CD4-positive, alpha-beta memory T cell (primary cell): ENCODE measurements at regions of chr1 and their contacts with region 1.

Region 1: GRCh38 chr1:9651565-9652378 is at the start of gene PIK3CD:
- DNase-seq: peak in 3 of 5 donors; percentile 34 to 59 (median 36)
- H3K4me3 ChIP-seq: peak within 1 kb of the TSS; percentile 84 to 96
- H3K4me3 Mint-ChIP-seq: peak within 1 kb of the TSS; percentile 100
- H3K27ac ChIP-seq: peak within 1 kb of the TSS; percentile 71
- H3K27ac Mint-ChIP-seq: peak within 1 kb of the TSS; percentile 97 to 100 (median 98)
- H3K4me1 ChIP-seq: peaks cover 46% of the 10 kb centered on the region
- H3K4me1 Mint-ChIP-seq: peaks cover 23 to 65% (median 45%) of the 10 kb centered on the region in 4 donors
- H3K27me3 ChIP-seq: no peaks in the 10 kb centered on the region
- H3K27me3 Mint-ChIP-seq: no peaks in the 10 kb centered on the region
- total RNA-seq, gene PIK3CD: 220 to 236 TPM

Region 2: GRCh38 chr1:9606458-9606857 is 45.3 kb before region 1 on chr1:
- CTCF ChIA-PET with region 1: no interaction called
- POLR2A ChIA-PET with region 1: no interaction called
- intact Hi-C with region 1: no loop called
- DNase-seq: no peak
- H3K4me3 ChIP-seq: no peak overlapping the region
- H3K4me3 Mint-ChIP-seq: no peak overlapping the region
- H3K27ac ChIP-seq: no peak overlapping the region
- H3K27ac Mint-ChIP-seq: no peak overlapping the region
- H3K4me1 ChIP-seq: no peaks in the 10 kb centered on the region
- H3K4me1 Mint-ChIP-seq: no peaks in the 10 kb centered on the region
- H3K27me3 ChIP-seq: no peaks in the 10 kb centered on the region
- H3K27me3 Mint-ChIP-seq: no peaks in the 10 kb centered on the region

Region 3: DNA sequence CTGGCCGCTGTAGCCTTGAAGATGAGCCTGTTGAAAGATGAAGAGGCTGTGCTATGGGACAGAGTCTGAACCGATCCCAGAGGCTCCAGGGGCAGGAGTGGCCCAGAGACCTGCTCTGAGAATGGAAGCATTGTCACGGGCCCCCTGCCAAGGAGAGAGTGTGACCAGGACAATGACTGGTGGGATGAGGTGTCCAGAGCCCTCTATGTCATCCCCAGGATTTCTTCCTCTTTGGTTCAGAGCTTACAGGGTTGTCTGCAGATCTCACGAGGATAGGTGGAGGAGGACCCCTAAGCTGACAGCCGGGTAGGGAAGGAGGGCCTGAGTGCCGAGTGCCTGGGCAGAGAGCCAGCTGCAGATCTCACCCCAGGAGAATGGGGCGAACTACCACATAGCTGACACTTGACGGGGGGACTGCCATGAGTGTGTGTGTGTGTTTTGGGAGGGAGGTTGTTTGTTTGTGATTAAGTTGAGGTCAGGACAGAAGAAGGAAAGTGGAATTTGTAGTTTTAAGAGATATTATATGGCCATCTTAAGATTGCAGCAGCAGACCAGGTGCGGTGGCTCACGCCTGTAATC is 25.1 kb after region 1 on chr1:
- CTCF ChIA-PET with region 1: interaction called, 4 read pairs
- POLR2A ChIA-PET with region 1: interaction called, 18 read pairs
- intact Hi-C with region 1: no loop called
- DNase-seq: no peak
- H3K4me3 ChIP-seq: no peak overlapping the region
- H3K4me3 Mint-ChIP-seq: peak overlapping the region in 5 of 8 donors; percentile 0 to 42 (median 37)
- H3K27ac ChIP-seq: no peak overlapping the region
- H3K27ac Mint-ChIP-seq: peak overlapping the region; percentile 70 to 90 (median 82)
- H3K4me1 ChIP-seq: peaks cover 71% of the 10 kb centered on the region
- H3K4me1 Mint-ChIP-seq: peaks cover 33 to 74% (median 52%) of the 10 kb centered on the region in 4 donors
- H3K27me3 ChIP-seq: no peaks in the 10 kb centered on the region
- H3K27me3 Mint-ChIP-seq: no peaks in the 10 kb centered on the region

Region 4: DNA sequence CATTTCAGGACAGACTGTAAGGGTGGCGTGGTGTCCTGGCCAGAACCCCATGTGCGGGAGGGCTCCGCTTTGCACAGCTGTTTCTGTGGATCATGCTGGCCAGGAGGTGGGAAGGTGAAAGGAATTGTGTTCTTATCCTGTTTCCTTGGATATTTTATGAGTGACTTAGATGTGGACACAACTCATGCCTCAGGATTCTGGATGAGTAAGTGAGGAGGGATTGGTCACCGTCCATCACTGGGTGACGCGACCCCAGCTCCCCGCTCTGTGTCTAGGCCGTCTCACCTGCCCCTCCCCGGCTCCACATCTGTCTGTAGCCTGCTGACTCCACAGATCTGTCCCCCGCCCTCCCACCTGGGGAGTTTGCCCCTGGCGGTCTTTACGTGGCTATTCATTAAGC is 48.6 kb after region 1 on chr1:
- CTCF ChIA-PET with region 1: interaction called, 3 read pairs
- POLR2A ChIA-PET with region 1: interaction called, 155 read pairs
- intact Hi-C with region 1: loop called (anchors 5 kb)
- DNase-seq: no peak
- H3K4me3 ChIP-seq: no peak overlapping the region
- H3K4me3 Mint-ChIP-seq: no peak overlapping the region
- H3K27ac ChIP-seq: no peak overlapping the region
- H3K27ac Mint-ChIP-seq: peak overlapping the region in 5 of 7 donors; percentile 46 to 80 (median 71)
- H3K4me1 ChIP-seq: peaks cover 59% of the 10 kb centered on the region
- H3K4me1 Mint-ChIP-seq: peaks cover 41 to 74% (median 57%) of the 10 kb centered on the region in 4 donors
- H3K27me3 ChIP-seq: no peaks in the 10 kb centered on the region
- H3K27me3 Mint-ChIP-seq: no peaks in the 10 kb centered on the region

Region 5: DNA sequence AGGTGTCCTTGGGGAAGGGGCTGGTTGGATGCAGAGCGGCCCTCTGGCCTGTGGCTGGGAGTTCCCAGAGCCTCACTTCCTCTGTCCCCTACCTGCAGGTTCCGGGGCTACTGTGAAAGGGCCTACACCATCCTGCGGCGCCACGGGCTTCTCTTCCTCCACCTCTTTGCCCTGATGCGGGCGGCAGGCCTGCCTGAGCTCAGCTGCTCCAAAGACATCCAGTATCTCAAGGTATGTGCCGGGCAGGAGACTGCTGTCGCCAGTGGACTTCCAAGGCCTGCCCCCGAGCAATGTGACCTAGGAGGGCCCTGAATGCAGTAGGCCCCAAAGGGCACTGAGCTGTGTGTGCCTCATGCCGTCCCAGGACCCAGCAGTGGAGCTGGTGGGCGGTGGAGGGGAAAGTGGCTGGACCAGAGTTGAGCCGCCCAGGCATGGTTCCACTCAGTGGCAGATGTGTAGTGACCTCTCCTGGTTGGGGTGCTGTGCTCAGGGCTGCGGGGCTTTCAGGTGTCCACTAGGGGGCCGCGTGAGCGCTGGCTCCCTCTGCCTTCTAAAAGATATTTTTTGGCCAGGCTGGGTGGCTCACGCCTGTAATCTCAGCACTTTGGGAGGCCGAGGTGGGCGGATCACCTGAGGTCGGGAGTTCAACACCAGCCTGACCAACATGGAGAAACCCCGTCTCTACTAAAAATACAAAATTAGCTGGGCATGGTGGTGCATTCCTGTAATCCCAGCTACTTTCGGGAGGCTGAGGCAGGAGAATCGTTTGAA is 73.1 kb after region 1 on chr1:
- CTCF ChIA-PET with region 1: interaction called, 23 read pairs
- POLR2A ChIA-PET with region 1: interaction called, 307 read pairs
- intact Hi-C with region 1: loop called (anchors 2 kb)
- DNase-seq: peak; percentile 66 to 71 (median 69)
- H3K4me3 ChIP-seq: no peak overlapping the region
- H3K4me3 Mint-ChIP-seq: peak overlapping the region in 2 of 8 donors; percentile 7 to 68
- H3K27ac ChIP-seq: no peak overlapping the region
- H3K27ac Mint-ChIP-seq: peak overlapping the region; percentile 57 to 93 (median 78)
- H3K4me1 ChIP-seq: peaks cover 84% of the 10 kb centered on the region
- H3K4me1 Mint-ChIP-seq: peaks cover 26 to 80% (median 48%) of the 10 kb centered on the region in 4 donors
- H3K27me3 ChIP-seq: no peaks in the 10 kb centered on the region
- H3K27me3 Mint-ChIP-seq: no peaks in the 10 kb centered on the region